Prostate gland (tissue), 2 donors: ENCODE measurements at regions of chr15 and their contacts with region 1.

Region 1: DNA sequence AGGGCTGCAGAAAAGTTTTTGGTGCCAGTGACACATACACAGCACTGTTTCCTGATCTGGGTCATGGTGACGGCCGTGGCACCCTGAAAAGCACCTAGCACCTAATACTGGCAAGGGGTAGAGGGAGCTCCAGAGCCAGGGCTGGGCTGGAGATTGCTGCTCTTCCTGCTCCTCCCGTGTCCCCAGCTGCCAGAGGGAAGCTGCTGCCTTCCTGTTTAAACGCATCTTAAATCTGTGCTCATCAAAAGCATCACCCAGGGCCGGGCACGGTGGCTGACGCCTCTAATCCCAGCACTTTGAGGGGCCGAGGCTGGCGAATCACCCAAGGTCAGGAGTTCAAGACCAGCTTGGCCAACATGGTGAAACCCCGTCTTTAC is 156.7 kb upstream of the MEF2A start:
- DNase-seq: peak; percentile 69
- H3K4me3 ChIP-seq: no peak overlapping the region
- H3K27ac ChIP-seq: peak overlapping the region in 1 of 2 donors; percentile 39
- H3K4me1 ChIP-seq: no peaks in the 10 kb centered on the region
- H3K27me3 ChIP-seq: no peaks in the 10 kb centered on the region
- CTCF ChIP-seq: peak in 3 of 4 experiments; percentile 46 to 73 (median 52)
- POLR2A ChIP-seq: no peak

Region 2: DNA sequence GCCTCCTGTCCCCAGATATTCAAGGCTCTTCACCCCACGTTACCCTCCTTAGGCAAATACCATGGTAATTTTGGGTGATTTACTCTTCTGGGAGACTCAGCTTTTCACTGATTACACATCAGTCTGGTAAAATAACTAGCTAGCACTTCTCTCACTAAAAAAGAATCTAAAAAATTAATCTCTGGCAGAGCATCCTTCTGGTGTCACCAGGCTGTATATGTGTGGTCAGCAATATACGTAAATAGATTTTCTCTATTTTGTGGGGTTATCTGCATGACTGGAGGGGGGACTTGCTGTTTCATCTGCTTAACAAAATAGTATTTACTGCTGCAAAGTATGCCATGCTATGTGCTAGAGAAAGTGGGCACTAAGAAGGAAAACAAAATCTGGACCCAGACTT is 112.7 kb before region 1 on chr15:
- intact Hi-C with region 1: loop called (anchors 10 kb)
- DNase-seq: no peak
- H3K4me3 ChIP-seq: no peak overlapping the region
- H3K27ac ChIP-seq: no peak overlapping the region
- H3K4me1 ChIP-seq: no peaks in the 10 kb centered on the region
- H3K27me3 ChIP-seq: no peaks in the 10 kb centered on the region
- CTCF ChIP-seq: no peak
- POLR2A ChIP-seq: no peak

Region 3: DNA sequence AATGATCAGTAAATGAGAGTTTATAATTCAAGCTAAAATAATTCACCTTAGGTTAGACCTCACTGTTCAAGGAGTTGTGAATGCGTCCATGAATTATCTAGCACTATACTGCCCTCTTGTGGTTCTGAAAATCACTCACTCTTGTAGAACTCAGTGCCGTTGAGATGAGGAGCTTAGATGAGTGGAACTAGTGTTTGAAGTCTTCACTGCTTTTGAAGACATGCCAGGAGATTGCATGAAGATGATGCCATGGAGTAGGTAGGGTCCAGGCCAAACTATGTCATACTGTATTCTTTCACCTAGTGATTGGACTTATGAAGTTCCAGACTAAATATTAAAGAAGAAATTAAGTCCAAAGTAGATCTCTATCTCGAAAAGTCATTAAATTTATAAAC is 295.4 kb after region 1 on chr15:
- intact Hi-C with region 1: loop called (anchors 10 kb)
- DNase-seq: peak; percentile 76
- H3K4me3 ChIP-seq: no peak overlapping the region
- H3K27ac ChIP-seq: peak overlapping the region in 1 of 2 donors; percentile 36
- H3K4me1 ChIP-seq: no peaks in the 10 kb centered on the region
- H3K27me3 ChIP-seq: no peaks in the 10 kb centered on the region
- CTCF ChIP-seq: peak; percentile 36 to 88 (median 84)
- POLR2A ChIP-seq: no peak